CD4-positive, alpha-beta T cell (primary cell): ENCODE measurements at regions of chr14 and their contacts with region 1.

Region 1: DNA sequence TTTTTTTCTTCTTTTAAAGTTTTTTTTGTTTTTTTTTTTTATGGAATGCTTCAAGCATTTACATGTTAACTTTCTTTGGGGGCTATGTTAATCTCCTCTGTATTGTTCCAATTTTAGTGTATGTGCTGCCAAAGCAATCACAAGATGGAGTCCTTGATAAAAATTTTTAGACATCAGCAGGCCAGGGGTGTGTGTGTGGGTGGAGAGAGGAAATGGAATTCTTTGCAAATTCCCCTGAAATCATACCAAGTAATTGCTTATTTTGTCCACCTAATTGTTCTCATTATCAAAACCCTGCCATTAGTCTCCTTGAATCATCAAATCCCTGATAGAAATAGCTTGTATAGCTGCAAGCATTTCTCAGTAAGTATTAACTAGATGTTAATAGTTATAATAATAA is 21.7 kb downstream of the RNF212B start:
- DNase-seq: no peak
- ATAC-seq: no peak
- H3K4me3 ChIP-seq: no peak overlapping the region
- H3K4me3 Mint-ChIP-seq: no peak overlapping the region
- H3K27ac ChIP-seq: no peak overlapping the region
- H3K27ac Mint-ChIP-seq: no peak overlapping the region
- H3K4me1 ChIP-seq: no peaks in the 10 kb centered on the region
- H3K4me1 Mint-ChIP-seq: no peaks in the 10 kb centered on the region
- H3K27me3 ChIP-seq: peaks cover 0 to 42% of the 10 kb centered on the region in 2 experiments
- H3K27me3 Mint-ChIP-seq: peaks cover 57% of the 10 kb centered on the region
- CTCF ChIP-seq: no peak

Region 2: GRCh38 chr14:23294734-23295561 is 35.5 kb after region 1 on chr14:
- CTCF ChIA-PET with region 1: interaction called, 4 read pairs
- POLR2A ChIA-PET with region 1: no interaction called
- intact Hi-C with region 1: loop called (anchors 2 kb)
- DNase-seq: peak; percentile 28 to 87 (median 48)
- ATAC-seq: peak; percentile 88
- H3K4me3 ChIP-seq: no peak overlapping the region
- H3K4me3 Mint-ChIP-seq: peak overlapping the region; percentile 27
- H3K27ac ChIP-seq: no peak overlapping the region
- H3K27ac Mint-ChIP-seq: peak overlapping the region; percentile 37
- H3K4me1 ChIP-seq: peaks cover 13% of the 10 kb centered on the region
- H3K4me1 Mint-ChIP-seq: peaks cover 28% of the 10 kb centered on the region
- H3K27me3 ChIP-seq: no peaks in the 10 kb centered on the region
- H3K27me3 Mint-ChIP-seq: no peaks in the 10 kb centered on the region
- CTCF ChIP-seq: peak; percentile 86

Region 3: DNA sequence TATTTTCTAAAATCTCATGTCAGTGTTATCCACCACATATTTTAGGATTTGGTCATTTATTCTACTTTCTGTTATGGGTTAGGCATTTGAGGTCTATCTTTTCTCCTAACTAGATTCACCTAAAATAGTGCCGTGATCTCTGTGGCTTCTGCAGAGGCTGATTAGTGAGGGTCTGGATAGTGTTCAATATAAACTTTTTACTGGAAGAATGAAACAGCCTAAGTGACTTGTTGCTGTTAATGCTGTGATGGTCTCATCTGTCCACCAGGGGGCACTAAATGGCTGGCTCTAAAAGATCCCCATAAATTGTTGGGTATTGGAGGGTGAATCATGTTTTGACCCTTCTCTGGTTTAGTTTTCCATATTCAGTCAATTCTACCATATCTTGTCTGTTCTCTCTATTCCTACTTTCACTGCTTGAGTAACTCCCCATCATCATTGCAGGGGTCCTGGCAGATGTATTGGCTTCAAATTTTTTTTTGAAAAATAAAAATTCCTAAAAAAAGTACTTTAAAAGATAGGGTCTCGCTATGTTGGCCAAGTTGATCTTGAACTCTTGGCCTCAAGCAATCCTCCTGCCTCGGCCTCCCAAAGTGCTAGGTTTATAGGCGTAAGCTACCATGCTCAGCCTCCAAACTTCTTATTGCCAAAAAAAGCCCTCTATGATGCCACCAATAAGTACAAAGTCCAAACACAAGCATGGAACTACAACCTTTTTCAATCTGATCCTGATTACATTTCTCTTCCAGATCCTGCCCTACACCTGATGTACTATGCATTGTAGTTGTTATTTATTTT is 68.7 kb after region 1 on chr14:
- CTCF ChIA-PET with region 1: no interaction called
- POLR2A ChIA-PET with region 1: no interaction called
- intact Hi-C with region 1: loop called (anchors 2 to 10 kb)
- DNase-seq: peak; percentile 32 to 84 (median 54)
- ATAC-seq: peak; percentile 78
- H3K4me3 ChIP-seq: no peak overlapping the region
- H3K4me3 Mint-ChIP-seq: peak overlapping the region; percentile 36
- H3K27ac ChIP-seq: no peak overlapping the region
- H3K27ac Mint-ChIP-seq: no peak overlapping the region
- H3K4me1 ChIP-seq: peaks cover 9% of the 10 kb centered on the region
- H3K4me1 Mint-ChIP-seq: peaks cover 8% of the 10 kb centered on the region
- H3K27me3 ChIP-seq: no peaks in the 10 kb centered on the region
- H3K27me3 Mint-ChIP-seq: no peaks in the 10 kb centered on the region
- CTCF ChIP-seq: peak; percentile 96